HCT116 (cell line): ENCODE measurements at regions of chr1 and their contacts with region 1.

Region 1: DNA sequence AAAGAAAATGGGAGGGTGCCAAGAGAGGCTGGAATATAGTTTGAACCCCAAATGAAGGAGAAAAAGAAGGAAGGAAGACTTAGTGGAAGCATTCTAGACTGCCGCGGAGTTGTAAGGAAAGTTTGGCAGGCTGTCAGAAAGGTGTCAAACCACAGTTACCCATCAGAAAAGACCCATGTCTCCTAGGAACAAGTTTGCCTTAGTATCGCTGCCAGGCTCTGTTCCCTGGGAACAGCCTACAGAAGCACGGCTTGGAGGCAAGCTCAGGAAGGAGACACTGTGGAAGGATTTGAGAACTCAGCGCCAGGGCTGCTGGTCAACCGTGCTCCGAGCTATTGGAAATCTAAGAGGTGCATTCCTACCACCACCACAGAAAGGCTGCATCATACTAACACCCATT is 197.4 kb downstream of the RRAGC start:
- DNase-seq: no peak
- ATAC-seq: no peak
- H3K4me3 ChIP-seq: no peak overlapping the region
- H3K27ac ChIP-seq: no peak overlapping the region
- H3K4me1 ChIP-seq: no peaks in the 10 kb centered on the region
- H3K27me3 ChIP-seq: peaks cover 21% of the 10 kb centered on the region; the same call in 1 of the 2 replicates
- CTCF ChIP-seq: no peak
- POLR2A ChIP-seq: no peak
- RAD21 ChIP-seq: no peak

Region 2: GRCh38 chr1:38381256-38381655 is 280.9 kb before region 1 on chr1:
- CTCF ChIA-PET with region 1: no interaction called
- POLR2A ChIA-PET with region 1: no interaction called
- RAD21 ChIA-PET with region 1: no interaction called
- intact Hi-C with region 1: loop called (anchors 10 kb)
- DNase-seq: no peak
- ATAC-seq: no peak
- H3K4me3 ChIP-seq: no peak overlapping the region
- H3K27ac ChIP-seq: no peak overlapping the region
- H3K4me1 ChIP-seq: no peaks in the 10 kb centered on the region
- H3K27me3 ChIP-seq: peaks cover 38% of the 10 kb centered on the region; the same call in 1 of the 2 replicates
- CTCF ChIP-seq: no peak
- POLR2A ChIP-seq: no peak
- RAD21 ChIP-seq: no peak